ENCODE measurements at regions of chr17 and their contacts with region 1.

Region 1: DNA sequence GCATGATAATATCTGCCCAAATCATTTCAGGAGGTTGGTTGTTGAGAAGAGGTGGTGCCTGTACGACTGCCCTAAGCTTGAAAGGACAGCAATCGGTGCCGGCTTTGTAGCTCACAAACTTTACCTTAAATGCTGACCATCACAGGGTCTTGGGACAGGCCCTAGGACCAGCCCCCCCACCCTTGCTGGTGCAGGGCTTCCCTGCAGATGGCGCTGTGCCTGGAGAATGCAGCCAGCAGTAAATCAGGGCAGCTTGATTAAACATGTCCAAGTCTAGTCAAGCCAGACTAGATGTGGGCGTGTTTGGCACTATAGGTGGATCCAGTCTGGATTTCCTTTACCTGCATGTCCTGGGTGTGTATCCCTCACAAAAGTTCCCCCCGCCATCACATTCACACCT is 135.5 kb upstream of the CRHR1 start:
- DNase-seq: no peak
- H3K4me3 ChIP-seq: no peak overlapping the region
- H3K27ac ChIP-seq: no peak overlapping the region
- H3K4me1 ChIP-seq: no peaks in the 10 kb centered on the region
- H3K27me3 ChIP-seq: no peaks in the 10 kb centered on the region
- CTCF ChIP-seq: no peak
- POLR2A ChIP-seq: no peak

Region 2: GRCh38 chr17:44199553-44200477 is 1448.8 kb before region 1 on chr17 and contains the start of gene ATXN7L3:
- intact Hi-C with region 1: no loop called
- DNase-seq: peak; percentile 99 to 100
- H3K4me3 ChIP-seq: peak within 1 kb of the TSS; percentile 80 to 96 (median 91)
- H3K27ac ChIP-seq: peak within 1 kb of the TSS; percentile 96 to 99
- H3K4me1 ChIP-seq: peaks cover 0 to 11% of the 10 kb centered on the region in 2 donors
- H3K27me3 ChIP-seq: no peaks in the 10 kb centered on the region
- CTCF ChIP-seq: no peak
- POLR2A ChIP-seq: no peak
- total RNA-seq, gene ATXN7L3: 34.7 to 45.8 (median 38.3) TPM

Region 3: DNA sequence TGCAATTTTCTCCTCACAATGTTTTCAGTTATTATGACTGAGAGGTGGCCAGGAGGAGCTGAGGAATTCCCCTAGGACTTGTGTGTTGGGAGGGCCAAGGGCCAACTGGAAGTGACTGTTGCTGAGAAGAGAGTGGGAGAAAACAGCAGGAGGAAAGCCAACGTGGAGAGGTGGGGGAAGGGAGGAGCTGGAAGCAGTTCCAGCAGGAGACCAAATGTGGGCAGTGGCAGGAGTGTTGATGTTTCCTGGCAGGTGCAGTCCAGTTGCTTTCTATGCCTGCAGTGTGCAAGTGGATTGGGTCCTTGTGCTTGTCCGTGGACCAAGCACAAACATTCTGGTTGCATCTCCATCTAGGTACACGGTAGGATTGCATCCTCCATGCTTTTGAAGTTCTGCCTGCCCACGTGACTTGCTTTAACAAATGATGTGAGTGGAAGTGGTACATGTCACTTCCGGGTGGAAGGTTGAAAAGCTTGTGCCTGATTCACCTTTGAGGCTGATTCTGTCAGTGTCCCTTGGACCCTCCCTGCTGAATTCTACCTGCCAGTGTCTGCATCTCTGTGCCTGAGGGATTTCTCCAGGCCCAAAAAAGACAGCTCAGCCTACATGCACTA is 80.8 kb after region 1 on chr17:
- intact Hi-C with region 1: no loop called
- DNase-seq: peak in 1 of 2 donors; percentile 10
- H3K4me3 ChIP-seq: no peak overlapping the region
- H3K27ac ChIP-seq: no peak overlapping the region
- H3K4me1 ChIP-seq: no peaks in the 10 kb centered on the region
- H3K27me3 ChIP-seq: peaks cover 0 to 17% of the 10 kb centered on the region in 2 donors
- CTCF ChIP-seq: no peak
- POLR2A ChIP-seq: no peak

Region 4: DNA sequence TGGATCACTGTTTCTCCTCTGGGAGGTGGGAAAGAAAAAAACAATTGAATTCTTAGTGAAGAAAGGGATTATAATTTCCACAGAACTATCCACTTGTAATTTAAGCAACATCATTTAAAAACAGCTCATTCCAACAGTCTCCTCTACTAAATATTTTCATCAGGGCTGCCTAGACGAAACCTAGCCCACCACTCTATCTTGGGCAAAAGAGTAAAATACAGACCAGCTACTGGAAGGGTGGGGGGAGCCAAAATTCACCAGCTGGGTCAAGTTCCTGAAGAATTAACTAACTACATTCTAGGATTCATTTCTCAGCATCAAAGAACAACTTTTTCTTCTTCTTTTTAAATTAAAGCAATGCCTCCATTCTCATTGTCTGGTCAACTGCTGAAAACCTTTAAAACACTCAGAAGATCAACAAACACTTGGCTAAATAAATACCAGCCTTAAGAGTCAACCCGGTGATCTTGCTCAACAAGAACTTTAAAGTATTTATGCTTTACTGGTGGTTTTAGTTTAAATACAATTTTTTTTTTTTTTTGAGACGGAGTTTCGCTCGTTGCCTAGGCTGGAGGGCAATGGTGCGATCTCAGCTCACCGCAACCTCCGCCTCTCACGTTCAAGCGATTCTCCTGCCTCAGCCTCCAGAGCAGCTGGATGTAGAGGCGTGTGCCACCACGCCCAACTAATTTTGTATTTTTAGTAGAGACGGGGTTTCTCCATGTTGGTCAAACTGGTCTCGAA is 519.4 kb after region 1 on chr17:
- intact Hi-C with region 1: loop called (anchors 5 kb)
- DNase-seq: no peak
- H3K4me3 ChIP-seq: no peak overlapping the region
- H3K27ac ChIP-seq: no peak overlapping the region
- H3K4me1 ChIP-seq: peaks cover 0 to 19% of the 10 kb centered on the region in 2 donors
- H3K27me3 ChIP-seq: no peaks in the 10 kb centered on the region
- CTCF ChIP-seq: no peak
- POLR2A ChIP-seq: no peak